Activated naive CD4-positive, alpha-beta T cell treated with anti-CD3 and anti-CD28 coated beads for 36 hours (primary cell): ENCODE measurements at regions of chr11 and their contacts with region 1.

Region 1: DNA sequence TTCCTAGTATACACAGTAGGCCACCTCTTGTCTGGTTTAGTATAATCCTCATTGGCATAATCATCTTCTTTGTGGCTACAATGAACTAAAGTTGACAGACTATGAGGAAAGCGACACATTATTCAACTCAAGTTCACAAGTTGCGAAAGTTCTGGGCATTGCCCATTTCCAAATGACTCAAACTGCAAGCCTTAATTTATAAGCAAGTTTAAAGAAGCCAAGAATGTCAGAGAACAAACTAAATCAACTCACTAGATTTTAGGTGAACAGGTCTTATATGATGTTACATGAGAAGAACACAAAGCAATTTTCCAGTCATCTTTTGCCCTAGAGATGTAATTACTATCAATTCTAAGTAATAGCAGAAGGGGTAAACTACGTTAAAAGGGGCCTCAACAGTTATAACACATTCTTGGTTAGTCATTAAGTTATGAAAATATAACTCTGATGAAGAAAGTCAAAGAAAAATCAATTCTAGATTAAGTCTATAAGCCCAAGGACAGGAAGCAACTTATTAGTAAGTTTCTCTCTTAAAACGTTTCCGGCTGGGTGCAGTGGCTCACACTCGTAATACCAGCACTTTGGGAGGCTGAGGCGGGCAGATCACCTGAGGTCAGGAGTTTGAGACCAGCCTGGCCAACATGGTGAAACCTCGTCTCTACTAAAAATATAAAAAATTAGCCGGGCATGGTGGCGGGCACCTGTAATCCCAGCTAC is 21.5 kb downstream of the PICALM start:
- DNase-seq: peak; percentile 69
- H3K4me3 Mint-ChIP-seq: peak overlapping the region; percentile 43
- H3K27ac Mint-ChIP-seq: peak overlapping the region; percentile 93
- H3K4me1 Mint-ChIP-seq: peaks cover 92% of the 10 kb centered on the region
- H3K27me3 Mint-ChIP-seq: no peaks in the 10 kb centered on the region

Region 2: GRCh38 chr11:84922836-84923235 is 1124.6 kb before region 1 on chr11:
- CTCF ChIA-PET with region 1: no interaction called
- intact Hi-C with region 1: no loop called
- DNase-seq: no peak
- H3K4me3 Mint-ChIP-seq: no peak overlapping the region
- H3K27ac Mint-ChIP-seq: no peak overlapping the region
- H3K4me1 Mint-ChIP-seq: no peaks in the 10 kb centered on the region
- H3K27me3 Mint-ChIP-seq: no peaks in the 10 kb centered on the region

Region 3: DNA sequence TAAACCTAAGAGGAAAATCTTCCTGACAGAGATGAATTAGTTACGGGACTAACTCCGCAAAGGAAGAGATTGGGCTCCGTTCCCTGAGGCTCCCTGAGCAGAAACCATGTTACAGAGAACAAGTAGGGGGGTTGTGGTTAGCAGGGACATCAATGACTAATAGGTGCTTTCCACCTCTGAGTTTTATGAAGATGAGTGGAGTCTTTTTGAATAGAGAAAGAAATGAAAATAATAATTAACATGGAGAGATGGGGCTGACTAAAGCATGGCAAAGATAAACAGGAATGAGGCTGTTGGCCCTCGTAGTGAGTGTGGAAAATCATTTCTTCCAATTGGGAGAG is 68.9 kb after region 1 on chr11:
- CTCF ChIA-PET with region 1: interaction called, 3 read pairs
- intact Hi-C with region 1: loop called (anchors 2 kb)
- DNase-seq: peak; percentile 57
- H3K4me3 Mint-ChIP-seq: no peak overlapping the region
- H3K27ac Mint-ChIP-seq: peak overlapping the region; percentile 17
- H3K4me1 Mint-ChIP-seq: peaks cover 28% of the 10 kb centered on the region
- H3K27me3 Mint-ChIP-seq: peaks cover 5% of the 10 kb centered on the region

Region 4: DNA sequence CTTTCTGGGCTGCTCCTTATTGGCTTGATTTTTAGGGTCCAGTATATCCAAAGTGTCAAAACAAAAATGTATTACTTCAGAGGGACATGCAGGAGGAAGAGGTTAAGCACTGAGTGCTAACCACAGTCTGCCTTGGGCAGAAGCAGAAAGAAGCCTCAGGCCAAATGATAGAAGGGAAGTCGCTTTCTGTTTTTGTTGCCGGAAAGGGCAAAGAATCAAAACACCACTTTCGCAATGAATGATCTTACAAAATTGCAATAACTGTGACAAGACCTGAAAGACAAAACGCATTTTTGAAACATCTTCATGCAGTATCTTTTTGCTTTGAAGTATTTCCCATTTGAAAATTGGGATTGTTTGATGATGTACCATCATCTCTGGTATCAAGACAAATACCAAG is 91.5 kb after region 1 on chr11:
- CTCF ChIA-PET with region 1: no interaction called
- intact Hi-C with region 1: loop called (anchors 1 kb)
- DNase-seq: peak; percentile 48
- H3K4me3 Mint-ChIP-seq: no peak overlapping the region
- H3K27ac Mint-ChIP-seq: peak overlapping the region; percentile 25
- H3K4me1 Mint-ChIP-seq: peaks cover 13% of the 10 kb centered on the region
- H3K27me3 Mint-ChIP-seq: no peaks in the 10 kb centered on the region

Region 5: DNA sequence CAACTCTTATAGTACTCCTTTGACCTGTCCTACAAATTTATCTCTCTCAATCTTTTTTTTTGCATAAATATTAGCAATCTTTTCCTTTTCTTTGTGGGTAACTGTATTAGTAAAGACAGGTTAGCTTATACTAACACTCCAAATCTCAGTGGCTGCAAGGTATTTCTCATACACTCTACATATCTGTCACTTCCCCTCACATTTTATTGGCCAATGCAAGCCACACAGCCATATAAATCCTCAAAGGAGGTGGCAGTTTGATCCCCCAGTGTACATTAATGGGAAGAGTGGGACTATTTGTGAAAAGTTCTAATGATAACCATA is 154.5 kb after region 1 on chr11:
- CTCF ChIA-PET with region 1: interaction called, 14 read pairs
- intact Hi-C with region 1: loop called (anchors 1 kb)
- DNase-seq: peak; percentile 42
- H3K4me3 Mint-ChIP-seq: no peak overlapping the region
- H3K27ac Mint-ChIP-seq: no peak overlapping the region
- H3K4me1 Mint-ChIP-seq: no peaks in the 10 kb centered on the region
- H3K27me3 Mint-ChIP-seq: no peaks in the 10 kb centered on the region

Region 6: DNA sequence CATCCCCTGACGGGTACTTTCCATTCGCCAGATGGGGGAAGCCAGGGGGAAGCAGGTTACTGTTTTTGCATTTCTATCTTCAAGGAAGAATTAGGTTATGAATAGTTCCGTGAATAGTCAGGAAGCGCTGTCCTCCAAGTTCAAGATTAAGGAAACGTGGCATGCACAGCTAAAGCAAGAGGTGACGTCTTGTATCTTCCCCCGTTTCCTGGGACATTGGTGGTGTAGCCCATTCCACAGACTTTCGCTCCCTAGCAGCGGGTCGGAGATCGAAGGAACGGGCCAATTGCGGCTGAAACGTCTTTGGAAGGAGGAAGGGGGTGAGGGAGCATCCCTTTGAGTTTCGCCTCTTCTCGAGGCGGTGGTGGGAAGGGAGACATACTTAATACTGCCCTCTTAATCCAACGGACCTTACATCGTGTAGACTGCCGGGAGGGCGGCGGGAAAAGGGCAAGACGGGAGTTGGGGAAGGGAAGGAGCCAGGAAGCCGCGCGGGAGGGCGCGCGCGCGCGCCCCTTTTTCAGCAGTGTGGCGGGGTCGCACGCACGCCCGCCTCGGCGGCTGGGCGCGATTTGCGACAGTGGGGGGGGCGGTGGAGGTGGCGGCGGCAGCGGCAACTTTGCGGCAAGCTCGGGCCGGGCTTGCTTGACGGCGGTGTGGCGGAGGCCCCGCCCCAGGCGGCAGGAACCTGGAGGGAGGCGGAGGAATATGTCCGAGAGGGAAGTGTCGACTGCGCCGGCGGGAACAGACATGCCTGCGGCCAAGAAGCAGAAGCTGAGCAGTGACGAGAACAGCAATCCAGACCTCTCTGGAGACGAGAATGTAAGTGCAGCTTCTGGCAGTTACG is 197.3 kb after region 1 on chr11 and contains the start of gene EED:
- CTCF ChIA-PET with region 1: interaction called, 3 read pairs
- intact Hi-C with region 1: loop called (anchors 1 kb)
- DNase-seq: peak; percentile 94
- H3K4me3 Mint-ChIP-seq: no peak within 1 kb of the TSS
- H3K27ac Mint-ChIP-seq: no peak within 1 kb of the TSS
- H3K4me1 Mint-ChIP-seq: peaks cover 35% of the 10 kb centered on the region
- H3K27me3 Mint-ChIP-seq: no peaks in the 10 kb centered on the region
- total RNA-seq, gene EED: 60.4 to 61.0 TPM